ENCODE measurements at regions of chr10 and their contacts with region 1.

Region 1: GRCh38 chr10:34454590-34455261 is 360.4 kb downstream of the PARD3 start:
- DNase-seq: no peak
- ATAC-seq: no peak
- H3K4me3 ChIP-seq: no peak overlapping the region
- H3K27ac ChIP-seq: no peak overlapping the region
- H3K4me1 ChIP-seq: no peaks in the 10 kb centered on the region
- H3K27me3 ChIP-seq: no peaks in the 10 kb centered on the region
- CTCF ChIP-seq: no peak
- EP300 ChIP-seq: no peak
- POLR2A ChIP-seq: no peak
- RAD21 ChIP-seq: no peak

Region 2: GRCh38 chr10:33193057-33193700 is 1261.5 kb before region 1 on chr10:
- CTCF ChIA-PET with region 1: no interaction called
- POLR2A ChIA-PET with region 1: no interaction called
- RAD21 ChIA-PET with region 1: no interaction called
- SMC1A ChIA-PET with region 1: no interaction called
- in situ Hi-C with region 1: no loop called
- intact Hi-C with region 1: no loop called
- DNase-seq: no peak
- ATAC-seq: peak; percentile 98
- H3K4me3 ChIP-seq: no peak overlapping the region
- H3K27ac ChIP-seq: no peak overlapping the region
- H3K4me1 ChIP-seq: no peaks in the 10 kb centered on the region
- H3K27me3 ChIP-seq: no peaks in the 10 kb centered on the region; a peak in 1 of 4 replicates
- CTCF ChIP-seq: peak; percentile 59 to 69 (median 66)
- EP300 ChIP-seq: no peak
- POLR2A ChIP-seq: no peak
- RAD21 ChIP-seq: peak; percentile 60

Region 3: DNA sequence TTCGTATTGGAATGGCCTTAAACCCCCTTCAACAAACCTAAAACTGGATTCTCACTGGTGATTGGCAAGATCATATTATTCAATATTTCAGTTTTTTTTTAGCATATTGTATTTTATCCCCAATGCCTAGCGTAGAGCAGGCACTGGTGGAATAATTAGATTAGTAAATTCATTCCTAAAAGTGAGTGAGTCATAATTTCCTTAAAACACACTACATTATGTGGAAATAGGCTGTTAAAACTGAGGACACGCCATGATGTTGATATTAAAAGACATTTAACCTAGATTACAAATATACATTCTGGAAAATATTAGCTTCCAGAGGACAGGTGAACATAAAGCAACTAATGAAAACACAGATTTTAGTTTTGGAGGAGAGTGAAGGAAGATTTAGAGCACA is 103.6 kb before region 1 on chr10:
- CTCF ChIA-PET with region 1: no interaction called
- POLR2A ChIA-PET with region 1: no interaction called
- RAD21 ChIA-PET with region 1: no interaction called
- SMC1A ChIA-PET with region 1: no interaction called
- in situ Hi-C with region 1: no loop called
- intact Hi-C with region 1: no loop called
- DNase-seq: no peak
- ATAC-seq: no peak
- H3K4me3 ChIP-seq: no peak overlapping the region
- H3K27ac ChIP-seq: no peak overlapping the region
- H3K4me1 ChIP-seq: no peaks in the 10 kb centered on the region
- H3K27me3 ChIP-seq: no peaks in the 10 kb centered on the region
- CTCF ChIP-seq: no peak
- EP300 ChIP-seq: no peak
- POLR2A ChIP-seq: no peak
- RAD21 ChIP-seq: no peak

Region 4: DNA sequence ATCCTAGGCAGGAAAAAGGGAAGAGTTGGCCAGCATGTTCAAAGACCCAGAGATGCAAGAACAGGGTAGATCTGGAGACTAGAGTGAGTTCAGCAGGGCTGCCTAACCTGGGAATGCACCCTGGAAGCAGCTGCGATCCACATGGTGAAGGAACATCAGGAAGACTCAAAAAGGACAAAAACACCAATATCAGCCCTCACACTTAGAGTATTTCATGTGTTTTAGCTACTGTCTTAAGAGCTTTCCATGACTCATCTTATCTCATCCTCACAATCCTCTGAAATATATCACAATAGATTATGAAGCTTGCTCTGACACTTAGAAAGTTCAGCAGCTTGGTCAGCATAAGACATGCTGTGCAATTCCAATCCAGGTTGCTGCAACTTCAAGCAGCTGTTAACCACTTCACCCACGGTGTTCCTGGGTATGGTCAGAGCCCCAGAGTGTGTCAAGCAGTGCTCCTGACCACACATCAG is 20.6 kb before region 1 on chr10:
- CTCF ChIA-PET with region 1: interaction called, 4 read pairs
- POLR2A ChIA-PET with region 1: interaction called, 4 read pairs
- RAD21 ChIA-PET with region 1: interaction called, 26 read pairs
- SMC1A ChIA-PET with region 1: interaction called, 11 read pairs
- in situ Hi-C with region 1: no loop called
- intact Hi-C with region 1: no loop called
- DNase-seq: no peak
- ATAC-seq: peak; percentile 35
- H3K4me3 ChIP-seq: no peak overlapping the region
- H3K27ac ChIP-seq: no peak overlapping the region
- H3K4me1 ChIP-seq: no peaks in the 10 kb centered on the region
- H3K27me3 ChIP-seq: no peaks in the 10 kb centered on the region
- CTCF ChIP-seq: no peak
- EP300 ChIP-seq: no peak
- POLR2A ChIP-seq: no peak
- RAD21 ChIP-seq: no peak

Measured in GM12878 (cell line).